Heart right ventricle (tissue), 16 donors: ENCODE measurements at regions of chr3 and their contacts with region 1.

Region 1: GRCh38 chr3:149384911-149385321 is 7.5 kb upstream of the TM4SF1 start:
- DNase-seq: no peak
- ATAC-seq: peak in 1 of 8 donors; percentile 43
- H3K4me3 ChIP-seq: no peak overlapping the region
- H3K27ac ChIP-seq: peak overlapping the region in 6 of 10 donors; percentile 42 to 87 (median 80)
- H3K4me1 ChIP-seq: peaks cover 2 to 58% (median 25%) of the 10 kb centered on the region in 9 donors
- H3K27me3 ChIP-seq: no peaks in the 10 kb centered on the region
- CTCF ChIP-seq: no peak

Region 2: GRCh38 chr3:149339931-149340309 is 45.0 kb before region 1 on chr3:
- intact Hi-C with region 1: loop called in 1 of 10 experiments (anchors 5 kb)
- DNase-seq: peak; percentile 69 to 89
- ATAC-seq: peak; percentile 89 to 99 (median 98)
- H3K4me3 ChIP-seq: peak overlapping the region in 4 of 10 donors; percentile 0 to 29 (median 12)
- H3K27ac ChIP-seq: peak overlapping the region; percentile 77 to 97 (median 85)
- H3K4me1 ChIP-seq: peaks cover 8 to 65% (median 34%) of the 10 kb centered on the region in 9 donors
- H3K27me3 ChIP-seq: no peaks in the 10 kb centered on the region
- CTCF ChIP-seq: no peak

Region 3: GRCh38 chr3:149352556-149352955 is 32.4 kb before region 1 on chr3:
- intact Hi-C with region 1: loop called in 3 of 10 experiments (anchors 5 kb)
- DNase-seq: peak; percentile 48 to 57
- ATAC-seq: peak; percentile 65 to 86 (median 82)
- H3K4me3 ChIP-seq: no peak overlapping the region
- H3K27ac ChIP-seq: peak overlapping the region in 4 of 10 donors; percentile 13 to 42 (median 34)
- H3K4me1 ChIP-seq: peaks cover 0 to 21% (median 0%) of the 10 kb centered on the region in 9 donors
- H3K27me3 ChIP-seq: no peaks in the 10 kb centered on the region
- CTCF ChIP-seq: peak; percentile 32 to 81 (median 66)

Region 4: GRCh38 chr3:149448331-149448831 is 63.5 kb after region 1 on chr3:
- intact Hi-C with region 1: loop called in 1 of 10 experiments (anchors 2 kb)
- DNase-seq: no peak
- ATAC-seq: peak in 2 of 8 donors; percentile 25 to 57
- H3K4me3 ChIP-seq: no peak overlapping the region
- H3K27ac ChIP-seq: peak overlapping the region in 9 of 10 donors; percentile 1 to 80 (median 64)
- H3K4me1 ChIP-seq: peaks cover 8 to 32% (median 29%) of the 10 kb centered on the region in 9 donors
- H3K27me3 ChIP-seq: no peaks in the 10 kb centered on the region
- CTCF ChIP-seq: no peak